HCT116 (cell line): ENCODE measurements at regions of chr17 and their contacts with region 1.

Region 1: GRCh38 chr17:15247891-15248529 is 17.1 kb downstream of the PMP22 start:
- DNase-seq: no peak
- ATAC-seq: peak; percentile 79
- H3K4me3 ChIP-seq: no peak overlapping the region
- H3K27ac ChIP-seq: no peak overlapping the region
- H3K4me1 ChIP-seq: no peaks in the 10 kb centered on the region
- H3K27me3 ChIP-seq: no peaks in the 10 kb centered on the region
- CTCF ChIP-seq: peak; percentile 20 to 64 (median 62); a peak in 4 of 6 replicates
- POLR2A ChIP-seq: no peak
- RAD21 ChIP-seq: peak; percentile 49

Region 2: GRCh38 chr17:15236281-15237105 is 11.5 kb before region 1 on chr17:
- CTCF ChIA-PET with region 1: interaction called, 10 read pairs
- POLR2A ChIA-PET with region 1: interaction called, 3 read pairs
- RAD21 ChIA-PET with region 1: no interaction called
- intact Hi-C with region 1: no loop called
- DNase-seq: no peak
- ATAC-seq: no peak
- H3K4me3 ChIP-seq: no peak overlapping the region
- H3K27ac ChIP-seq: no peak overlapping the region
- H3K4me1 ChIP-seq: no peaks in the 10 kb centered on the region
- H3K27me3 ChIP-seq: no peaks in the 10 kb centered on the region
- CTCF ChIP-seq: no peak
- POLR2A ChIP-seq: no peak
- RAD21 ChIP-seq: no peak

Region 3: GRCh38 chr17:15371376-15372130 is 123.5 kb after region 1 on chr17:
- CTCF ChIA-PET with region 1: no interaction called
- POLR2A ChIA-PET with region 1: no interaction called
- RAD21 ChIA-PET with region 1: no interaction called
- intact Hi-C with region 1: no loop called
- DNase-seq: no peak
- ATAC-seq: no peak
- H3K4me3 ChIP-seq: no peak overlapping the region
- H3K27ac ChIP-seq: no peak overlapping the region
- H3K4me1 ChIP-seq: no peaks in the 10 kb centered on the region
- H3K27me3 ChIP-seq: no peaks in the 10 kb centered on the region
- CTCF ChIP-seq: no peak
- POLR2A ChIP-seq: no peak
- RAD21 ChIP-seq: no peak